WTC11 (cell line): ENCODE measurements at regions of chr2 and their contacts with region 1.

Region 1: GRCh38 chr2:158024288-158024898 is 77.3 kb upstream of the UPP2 start:
- DNase-seq: peak; percentile 65
- ATAC-seq: peak; percentile 60
- H3K4me3 Mint-ChIP-seq: no peak overlapping the region
- H3K27ac Mint-ChIP-seq: no peak overlapping the region
- H3K4me1 Mint-ChIP-seq: 0 out of 2 replicates have a peak, but pooled peaks cover 2% of the 10 kb centered on the region
- H3K27me3 Mint-ChIP-seq: no peaks in the 10 kb centered on the region; the same call in 1 of the 2 replicates
- CTCF ChIP-seq: peak; percentile 71

Region 2: DNA sequence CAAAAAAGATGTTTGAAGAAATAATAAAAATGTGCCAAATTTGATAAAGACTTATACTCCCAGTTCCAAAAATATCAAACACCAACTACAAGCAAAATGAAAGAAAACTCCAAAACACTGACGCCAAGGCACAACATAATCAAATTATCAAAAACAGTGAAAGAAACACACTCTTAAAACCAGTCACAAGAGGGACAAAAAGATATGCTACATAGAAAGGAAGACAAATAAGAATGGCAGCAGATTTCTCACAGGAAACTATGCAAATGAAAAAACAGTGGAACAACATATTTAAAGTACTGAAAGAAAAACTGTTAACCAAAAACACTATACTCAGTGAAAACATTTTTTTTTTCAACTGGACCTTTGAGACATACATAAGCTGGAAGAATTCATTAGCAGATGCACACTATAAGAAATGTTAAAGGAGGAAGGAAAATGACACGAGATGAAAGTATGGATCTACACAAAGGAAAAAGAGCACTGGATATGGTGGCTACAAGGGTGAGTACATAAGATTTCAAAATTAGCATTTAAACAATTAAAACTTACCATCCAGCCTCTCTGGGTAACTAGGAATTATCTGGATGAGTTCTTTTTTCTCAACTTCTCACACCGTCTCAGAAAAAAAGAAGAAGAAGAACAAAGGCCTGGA is 301.7 kb before region 1 on chr2:
- CTCF ChIA-PET with region 1: no interaction called
- POLR2A ChIA-PET with region 1: no interaction called
- DNase-seq: no peak
- ATAC-seq: no peak
- H3K4me3 Mint-ChIP-seq: no peak overlapping the region
- H3K27ac Mint-ChIP-seq: no peak overlapping the region
- H3K4me1 Mint-ChIP-seq: no peaks in the 10 kb centered on the region
- H3K27me3 Mint-ChIP-seq: no peaks in the 10 kb centered on the region; the same call in 1 of the 2 replicates
- CTCF ChIP-seq: no peak

Region 3: GRCh38 chr2:158006961-158007719 is 17.3 kb before region 1 on chr2:
- CTCF ChIA-PET with region 1: interaction called, 14 read pairs
- POLR2A ChIA-PET with region 1: interaction called, 3 read pairs
- DNase-seq: peak; percentile 32
- ATAC-seq: peak; percentile 54
- H3K4me3 Mint-ChIP-seq: no peak overlapping the region
- H3K27ac Mint-ChIP-seq: no peak overlapping the region
- H3K4me1 Mint-ChIP-seq: peaks cover 39% of the 10 kb centered on the region
- H3K27me3 Mint-ChIP-seq: peaks cover 29% of the 10 kb centered on the region
- CTCF ChIP-seq: no peak

Region 4: GRCh38 chr2:158045362-158045761 is 21.0 kb after region 1 on chr2:
- CTCF ChIA-PET with region 1: interaction called, 25 read pairs
- POLR2A ChIA-PET with region 1: no interaction called
- DNase-seq: peak; percentile 42
- ATAC-seq: peak; percentile 91
- H3K4me3 Mint-ChIP-seq: no peak overlapping the region
- H3K27ac Mint-ChIP-seq: no peak overlapping the region
- H3K4me1 Mint-ChIP-seq: peaks cover 12% of the 10 kb centered on the region
- H3K27me3 Mint-ChIP-seq: no peaks in the 10 kb centered on the region
- CTCF ChIP-seq: no peak

Region 5: DNA sequence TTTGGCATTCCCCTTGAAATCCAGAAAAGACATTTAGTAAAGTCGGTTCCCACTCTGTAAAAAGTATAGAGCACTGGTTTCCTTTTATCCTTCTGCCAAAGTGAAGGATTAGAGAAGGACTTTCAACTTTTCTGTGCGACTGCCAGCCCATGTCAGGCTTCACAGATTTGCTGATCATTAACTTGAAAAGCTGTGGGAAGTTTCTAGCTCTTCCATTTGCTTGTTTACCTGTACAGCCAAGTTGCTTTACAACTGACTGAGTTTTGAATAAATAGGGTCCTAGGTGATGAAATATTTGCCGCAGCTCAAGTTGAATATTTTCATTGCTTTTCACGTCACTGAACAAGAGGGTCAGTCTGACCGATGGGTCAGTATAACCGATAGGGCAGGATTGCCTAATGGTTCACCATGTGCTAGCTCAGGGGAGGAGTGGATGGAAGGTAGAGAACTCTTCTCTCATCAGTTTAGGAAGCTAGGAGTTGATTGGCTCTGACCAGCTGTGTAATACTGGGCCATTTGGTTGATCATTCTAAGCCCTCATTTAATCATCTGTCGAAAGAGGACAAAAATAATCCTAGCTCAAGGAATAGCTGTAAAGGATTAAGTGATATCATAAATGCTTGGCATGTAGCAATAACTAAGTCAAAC is 107.7 kb after region 1 on chr2:
- CTCF ChIA-PET with region 1: no interaction called
- POLR2A ChIA-PET with region 1: no interaction called
- DNase-seq: no peak
- ATAC-seq: no peak
- H3K4me3 Mint-ChIP-seq: no peak overlapping the region
- H3K27ac Mint-ChIP-seq: no peak overlapping the region
- H3K4me1 Mint-ChIP-seq: peaks cover 7% of the 10 kb centered on the region
- H3K27me3 Mint-ChIP-seq: no peaks in the 10 kb centered on the region
- CTCF ChIP-seq: no peak

Region 6: DNA sequence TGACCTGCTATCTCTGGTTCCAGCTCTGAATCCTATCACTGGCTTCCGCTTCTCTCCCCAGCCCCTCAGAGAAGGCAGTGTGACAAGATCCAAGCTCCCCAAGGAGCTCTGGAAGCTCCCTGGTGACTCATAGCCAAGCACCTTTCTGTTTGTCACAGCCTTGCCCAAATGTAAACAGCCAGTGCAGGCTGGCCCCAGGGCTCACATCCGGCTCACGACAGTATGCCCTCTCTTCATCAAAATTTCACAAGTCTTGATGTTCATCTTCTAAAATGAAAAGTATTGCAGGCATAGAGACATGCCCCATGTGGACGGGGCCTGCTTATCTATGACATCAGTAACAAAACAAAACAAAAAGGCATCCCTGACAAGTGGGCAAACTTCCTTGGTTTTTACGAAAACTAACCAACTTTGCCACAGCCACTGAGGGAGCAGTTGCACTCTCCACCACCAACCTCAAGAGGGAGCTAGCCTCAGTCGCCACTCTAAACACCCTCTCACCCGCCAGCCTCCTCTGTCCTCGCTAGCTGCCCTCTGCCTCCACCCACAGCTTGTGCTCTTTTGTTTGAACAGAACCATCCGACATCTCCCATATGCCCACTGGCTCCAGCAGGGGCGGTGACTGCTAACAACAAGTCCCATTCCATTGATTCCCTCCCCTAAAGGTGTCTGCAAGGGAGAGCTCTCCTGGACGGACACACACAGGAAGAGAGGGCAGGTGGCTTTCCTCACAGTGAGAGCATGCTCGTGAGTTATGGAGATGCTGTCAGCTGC is 699.7 kb after region 1 on chr2:
- CTCF ChIA-PET with region 1: interaction called, 12 read pairs
- POLR2A ChIA-PET with region 1: no interaction called
- DNase-seq: peak; percentile 55
- ATAC-seq: peak; percentile 92
- H3K4me3 Mint-ChIP-seq: no peak overlapping the region
- H3K27ac Mint-ChIP-seq: peak overlapping the region; percentile 50
- H3K4me1 Mint-ChIP-seq: peaks cover 23% of the 10 kb centered on the region
- H3K27me3 Mint-ChIP-seq: no peaks in the 10 kb centered on the region; the same call in 1 of the 2 replicates
- CTCF ChIP-seq: peak; percentile 39